ENCODE measurements at regions of chr5 and their contacts with region 1.

Region 1: DNA sequence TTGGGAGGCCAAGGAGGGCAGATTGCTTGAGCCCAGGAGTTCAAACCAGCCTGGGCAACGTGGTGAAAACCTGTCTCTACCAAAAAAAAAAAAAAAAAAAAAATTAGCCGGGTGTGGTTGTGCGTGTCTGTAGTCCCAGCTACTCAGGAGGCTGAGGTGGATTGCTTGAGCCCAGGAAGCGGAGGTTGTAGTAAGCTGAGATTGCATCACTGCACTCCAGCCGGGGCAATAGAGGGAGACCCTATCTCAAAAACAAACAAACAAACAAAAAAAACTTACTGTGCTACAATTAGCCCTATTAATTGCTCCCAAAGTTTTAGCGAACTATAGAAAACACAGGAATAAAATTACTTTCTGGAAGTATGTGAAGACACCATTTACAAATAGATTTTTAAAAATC is 67.6 kb downstream of the ANKHD1 start:
- H3K4me3 ChIP-seq: no peak overlapping the region
- H3K27ac ChIP-seq: no peak overlapping the region
- H3K4me1 ChIP-seq: peaks cover 5% of the 10 kb centered on the region; the same call in 1 of the 2 replicates
- CTCF ChIP-seq: no peak

Region 2: GRCh38 chr5:140319833-140320232 is 149.4 kb before region 1 on chr5:
- CTCF ChIA-PET with region 1: no interaction called
- POLR2A ChIA-PET with region 1: interaction called, 10 read pairs
- H3K4me3 ChIP-seq: no peak overlapping the region
- H3K27ac ChIP-seq: no peak overlapping the region
- H3K4me1 ChIP-seq: no peaks in the 10 kb centered on the region
- CTCF ChIP-seq: no peak

Region 3: GRCh38 chr5:140753561-140753960 is 284.3 kb after region 1 on chr5:
- CTCF ChIA-PET with region 1: no interaction called
- POLR2A ChIA-PET with region 1: no interaction called
- H3K4me3 ChIP-seq: no peak overlapping the region
- H3K27ac ChIP-seq: no peak overlapping the region
- H3K4me1 ChIP-seq: no peaks in the 10 kb centered on the region
- CTCF ChIP-seq: no peak